Ascending aorta (tissue), 2 donors: ENCODE measurements at regions of chr22 and their contacts with region 1.

Region 1: GRCh38 chr22:32474635-32475467 is at the start of gene FBXO7:
- DNase-seq: peak; percentile 61 to 95
- H3K4me3 ChIP-seq: peak within 1 kb of the TSS; percentile 76 to 85
- H3K27ac ChIP-seq: peak within 1 kb of the TSS; percentile 98 to 99
- H3K4me1 ChIP-seq: peaks cover 4 to 18% of the 10 kb centered on the region in 2 donors
- H3K27me3 ChIP-seq: no peaks in the 10 kb centered on the region
- CTCF ChIP-seq: peak; percentile 26 to 52 (median 37)
- total RNA-seq, gene FBXO7: 47.0 TPM

Region 2: GRCh38 chr22:31952459-31952858 is 522.4 kb before region 1 on chr22:
- intact Hi-C with region 1: loop called (anchors 2 kb)
- DNase-seq: no peak
- H3K4me3 ChIP-seq: no peak overlapping the region
- H3K27ac ChIP-seq: peak overlapping the region; percentile 80 to 84
- H3K4me1 ChIP-seq: peaks cover 17 to 47% of the 10 kb centered on the region in 2 donors
- H3K27me3 ChIP-seq: no peaks in the 10 kb centered on the region
- CTCF ChIP-seq: no peak

Region 3: GRCh38 chr22:31970490-31971444 is 504.1 kb before region 1 on chr22:
- intact Hi-C with region 1: loop called (anchors 2 kb)
- DNase-seq: peak in 1 of 2 donors; percentile 90
- H3K4me3 ChIP-seq: peak overlapping the region; percentile 51 to 57
- H3K27ac ChIP-seq: peak overlapping the region; percentile 8 to 16
- H3K4me1 ChIP-seq: peaks cover 4 to 9% of the 10 kb centered on the region in 2 donors
- H3K27me3 ChIP-seq: no peaks in the 10 kb centered on the region
- CTCF ChIP-seq: peak; percentile 82 to 94 (median 94)

Region 4: DNA sequence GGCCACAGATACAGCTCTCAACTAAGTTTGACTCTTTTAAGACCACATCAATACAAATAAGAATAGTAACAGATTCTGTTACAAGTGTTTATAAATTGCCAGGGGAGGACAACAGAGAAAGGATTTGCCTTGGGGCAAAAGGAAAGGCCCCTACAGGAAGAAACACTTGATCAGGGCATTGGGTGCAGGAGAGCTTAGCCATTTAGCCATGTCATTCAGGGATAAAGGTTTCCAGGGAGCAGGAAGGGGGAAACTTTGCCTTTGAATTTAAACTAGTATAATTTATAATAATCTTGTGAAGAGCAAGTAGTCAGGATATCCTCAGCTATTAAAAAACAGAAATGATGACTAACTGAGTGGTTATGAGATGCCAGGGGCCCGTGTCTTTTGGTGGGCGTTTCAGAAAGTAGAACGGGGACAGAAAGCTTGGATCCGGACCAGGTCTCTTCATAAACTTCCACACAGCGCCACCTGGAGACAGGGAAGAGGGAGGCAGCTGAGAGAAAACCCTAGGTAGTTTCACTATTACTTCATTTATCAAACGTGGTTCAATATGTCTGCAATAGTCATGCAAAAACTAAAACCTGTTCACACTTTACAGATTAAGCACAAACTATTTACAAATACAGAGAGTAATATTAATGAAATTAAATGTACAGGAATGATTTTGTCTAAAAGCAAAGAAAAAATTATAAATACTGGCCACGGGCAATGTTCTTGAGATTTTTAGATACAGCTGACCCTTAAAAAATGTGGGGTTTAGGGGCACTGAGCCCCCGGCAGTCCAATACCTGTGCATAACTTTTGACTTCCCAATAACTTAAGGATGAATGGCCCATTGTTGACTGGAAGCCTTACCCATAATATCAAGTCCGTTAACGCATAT is 208.7 kb before region 1 on chr22:
- intact Hi-C with region 1: loop called (anchors 10 kb)
- DNase-seq: peak in 1 of 2 donors; percentile 82
- H3K4me3 ChIP-seq: peak overlapping the region in 1 of 2 donors; percentile 33
- H3K27ac ChIP-seq: peak overlapping the region in 1 of 2 donors; percentile 19
- H3K4me1 ChIP-seq: no peaks in the 10 kb centered on the region
- H3K27me3 ChIP-seq: no peaks in the 10 kb centered on the region
- CTCF ChIP-seq: peak; percentile 47 to 78 (median 66)

Region 5: DNA sequence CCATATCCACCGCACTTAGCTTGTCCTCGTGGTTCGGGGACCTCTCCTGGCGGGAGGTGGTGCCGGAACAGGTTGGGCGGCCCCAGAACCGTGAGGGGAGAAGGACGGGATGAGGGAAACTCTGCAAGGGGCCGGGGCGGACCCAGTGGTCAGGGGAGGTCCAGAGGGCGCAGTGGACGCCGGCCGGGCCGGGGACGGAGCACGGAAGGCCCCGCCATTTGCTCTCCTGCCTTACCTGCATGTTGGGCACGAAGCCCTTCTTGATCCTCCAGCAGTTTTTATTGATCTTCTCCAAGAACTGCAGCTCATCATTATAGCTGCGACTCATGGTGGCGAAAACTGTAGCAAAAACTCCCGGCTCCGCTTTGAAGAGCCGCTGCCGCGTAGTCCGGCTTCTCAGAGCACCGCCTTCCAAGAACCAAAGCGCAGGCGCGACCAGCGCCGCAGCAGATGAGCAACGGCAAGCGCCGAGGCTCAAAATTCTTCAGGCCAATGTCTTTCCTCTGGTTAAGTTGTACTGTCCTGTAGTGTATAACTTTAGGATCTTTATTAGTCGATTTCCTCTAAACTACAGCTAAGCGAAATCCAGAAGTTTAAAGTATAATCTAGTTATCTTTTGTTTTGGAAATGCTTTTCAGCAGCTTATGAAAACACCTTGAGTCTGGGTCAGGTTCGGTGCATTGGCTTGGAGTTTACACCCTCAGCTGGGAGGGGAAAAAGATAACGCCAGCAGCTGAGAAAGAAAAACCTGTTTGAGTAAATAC is 62.8 kb before region 1 on chr22 and contains the start of gene RTCB:
- intact Hi-C with region 1: loop called (anchors 1 kb)
- DNase-seq: peak; percentile 11 to 91
- H3K4me3 ChIP-seq: peak within 1 kb of the TSS; percentile 69 to 85
- H3K27ac ChIP-seq: peak within 1 kb of the TSS; percentile 5 to 41
- H3K4me1 ChIP-seq: peaks cover 4 to 15% of the 10 kb centered on the region in 2 donors
- H3K27me3 ChIP-seq: no peaks in the 10 kb centered on the region
- CTCF ChIP-seq: no peak
- total RNA-seq, gene RTCB: 55.2 TPM

Region 6: DNA sequence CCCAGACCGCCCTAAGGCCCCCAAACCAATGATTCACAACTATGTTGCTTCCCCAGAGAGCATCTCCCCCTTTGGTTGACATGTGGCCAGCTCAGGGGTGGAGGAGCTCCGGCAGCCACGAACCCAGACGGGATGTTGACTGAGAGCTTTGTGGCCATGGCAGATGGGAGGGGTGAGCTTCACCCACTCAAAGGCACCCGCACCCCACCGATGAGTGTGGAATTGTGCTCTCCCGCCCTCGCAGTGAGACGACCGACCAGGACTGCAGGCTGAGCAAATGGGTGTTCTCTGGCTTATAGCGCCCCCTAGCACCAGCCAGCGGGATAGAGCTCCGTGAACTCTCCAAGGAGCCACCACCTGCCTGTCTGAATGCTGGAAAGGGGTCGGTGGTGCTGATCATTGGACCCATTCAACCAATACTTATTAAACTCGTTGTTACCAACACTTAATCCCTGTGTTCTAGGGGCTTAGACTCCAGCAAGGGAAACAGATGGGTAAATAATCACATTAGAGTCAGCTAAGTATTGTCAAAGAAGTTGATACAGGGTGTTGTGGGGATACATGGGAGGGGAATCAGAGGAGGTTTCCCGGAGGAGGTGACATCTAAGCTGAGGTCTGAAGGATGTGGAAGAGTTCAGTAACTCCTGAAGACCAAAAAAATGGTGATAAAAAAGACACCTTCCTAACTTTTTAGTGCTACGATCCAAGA is 322.2 kb after region 1 on chr22:
- intact Hi-C with region 1: loop called (anchors 5 kb)
- DNase-seq: peak in 1 of 2 donors; percentile 81
- H3K4me3 ChIP-seq: no peak overlapping the region
- H3K27ac ChIP-seq: no peak overlapping the region
- H3K4me1 ChIP-seq: peaks cover 0 to 3% of the 10 kb centered on the region in 2 donors
- H3K27me3 ChIP-seq: no peaks in the 10 kb centered on the region
- CTCF ChIP-seq: peak; percentile 78 to 89 (median 85)